Activated CD4-positive, alpha-beta memory T cell treated with anti-CD3 and anti-CD28 coated beads for 36 hours (primary cell): ENCODE measurements at regions of chr15 and their contacts with region 1.

Region 1: GRCh38 chr15:54264056-54264455 is 285.8 kb downstream of the UNC13C start:
- DNase-seq: no peak
- H3K4me3 Mint-ChIP-seq: no peak overlapping the region
- H3K27ac Mint-ChIP-seq: no peak overlapping the region
- H3K4me1 Mint-ChIP-seq: no peaks in the 10 kb centered on the region
- H3K27me3 Mint-ChIP-seq: no peaks in the 10 kb centered on the region

Region 2: DNA sequence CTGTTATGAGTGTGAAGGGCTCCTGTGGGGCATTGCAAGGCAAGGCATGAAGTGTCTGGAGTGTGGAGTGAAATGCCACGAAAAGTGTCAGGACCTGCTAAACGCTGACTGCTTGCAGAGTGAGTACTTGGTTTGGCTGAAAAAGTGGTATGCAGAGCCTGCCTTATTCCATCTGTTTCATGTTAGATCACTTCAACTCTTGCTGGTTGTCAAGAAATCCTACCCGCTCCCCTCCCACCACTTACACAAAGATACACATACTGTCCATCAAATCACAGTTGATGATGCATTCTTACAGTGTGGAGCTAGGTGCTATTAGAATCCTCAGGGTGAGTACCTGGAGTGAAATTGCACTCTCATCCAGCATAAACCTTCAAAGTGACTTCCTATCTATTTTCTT is 13.7 kb before region 1 on chr15:
- CTCF ChIA-PET with region 1: no interaction called
- POLR2A ChIA-PET with region 1: no interaction called
- intact Hi-C with region 1: no loop called
- DNase-seq: no peak
- H3K4me3 Mint-ChIP-seq: no peak overlapping the region
- H3K27ac Mint-ChIP-seq: no peak overlapping the region
- H3K4me1 Mint-ChIP-seq: no peaks in the 10 kb centered on the region
- H3K27me3 Mint-ChIP-seq: peaks cover 2% of the 10 kb centered on the region

Region 3: GRCh38 chr15:54321426-54321825 is 57.4 kb after region 1 on chr15:
- CTCF ChIA-PET with region 1: no interaction called
- POLR2A ChIA-PET with region 1: no interaction called
- intact Hi-C with region 1: loop called (anchors 10 kb)
- DNase-seq: no peak
- H3K4me3 Mint-ChIP-seq: no peak overlapping the region
- H3K27ac Mint-ChIP-seq: no peak overlapping the region
- H3K4me1 Mint-ChIP-seq: no peaks in the 10 kb centered on the region
- H3K27me3 Mint-ChIP-seq: no peaks in the 10 kb centered on the region